ENCODE measurements at regions of chr7 and their contacts with region 1.

Region 1: GRCh38 chr7:74289018-74289658 is at the start of gene CLIP2:
- DNase-seq: peak; percentile 41
- ATAC-seq: peak; percentile 69
- H3K4me3 ChIP-seq: peak within 1 kb of the TSS; percentile 66 to 90 (median 83)
- H3K27ac ChIP-seq: peak within 1 kb of the TSS; percentile 31
- H3K4me1 ChIP-seq: peaks cover 73% of the 10 kb centered on the region
- H3K27me3 ChIP-seq: no peaks in the 10 kb centered on the region
- CTCF ChIP-seq: no peak
- EP300 ChIP-seq: no peak
- POLR2A ChIP-seq: peak in 1 of 2 experiments; percentile 61; a peak in 2 of 4 replicates
- RAD21 ChIP-seq: peak; percentile 51; the same call in 1 of the 2 replicates
- total RNA-seq, gene CLIP2: 13.6 and 17.4 TPM in 2 replicates

Region 2: DNA sequence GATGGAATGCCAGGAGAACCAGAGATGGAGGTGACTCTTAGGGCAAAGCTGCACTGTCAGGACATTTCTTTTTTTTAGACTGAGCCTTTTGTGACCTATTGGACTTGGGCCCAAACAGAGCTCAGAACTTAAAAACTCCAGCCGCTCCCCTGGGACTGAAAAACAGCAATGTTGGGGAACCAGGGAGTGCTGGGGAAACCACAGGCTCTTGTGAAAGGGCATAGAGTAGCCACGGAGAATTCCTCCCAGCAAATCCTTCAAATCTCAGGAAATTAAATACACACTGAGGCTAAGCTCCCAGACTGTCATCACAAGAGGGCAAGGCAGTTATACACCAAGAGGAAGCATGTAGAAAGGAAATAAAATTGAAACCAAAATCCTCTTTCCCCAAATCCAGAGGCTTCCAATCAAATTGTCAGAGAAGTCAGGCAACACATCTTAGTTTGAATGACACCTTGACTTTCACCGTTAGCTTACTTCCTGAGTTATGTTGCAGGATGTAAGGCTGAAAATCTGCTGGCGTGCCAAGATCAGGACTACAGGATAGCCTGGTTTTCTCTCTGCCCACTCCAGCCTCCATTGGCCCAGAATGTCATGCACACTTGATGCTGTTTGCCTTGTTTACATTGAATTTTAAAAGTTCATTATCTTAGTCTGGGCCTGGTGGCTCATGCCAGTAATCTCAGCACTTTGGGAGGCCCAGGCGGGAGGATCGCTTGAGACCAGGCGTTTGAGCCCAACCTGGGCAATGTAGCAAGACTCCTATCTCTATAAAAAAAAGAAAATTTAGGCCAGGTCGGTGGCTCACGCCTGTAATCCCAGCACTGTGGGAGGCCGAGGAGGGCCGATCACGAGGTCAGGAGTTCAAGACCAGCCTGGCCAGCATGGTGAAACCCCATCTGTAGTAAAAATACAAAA is 32.4 kb before region 1 on chr7:
- CTCF ChIA-PET with region 1: no interaction called
- POLR2A ChIA-PET with region 1: interaction called, 6 read pairs
- in situ Hi-C with region 1: no loop called
- intact Hi-C with region 1: loop called (anchors 5 kb)
- DNase-seq: no peak
- ATAC-seq: no peak
- H3K4me3 ChIP-seq: peak overlapping the region in 1 of 3 experiments; percentile 29; a peak in 1 of 6 replicates
- H3K27ac ChIP-seq: peak overlapping the region; percentile 50
- H3K4me1 ChIP-seq: peaks cover 59% of the 10 kb centered on the region
- H3K27me3 ChIP-seq: no peaks in the 10 kb centered on the region; a peak in 1 of 5 replicates
- CTCF ChIP-seq: no peak
- EP300 ChIP-seq: no peak
- POLR2A ChIP-seq: no peak
- RAD21 ChIP-seq: no peak

Region 3: GRCh38 chr7:74262639-74263398 is 26.3 kb before region 1 on chr7:
- CTCF ChIA-PET with region 1: no interaction called
- POLR2A ChIA-PET with region 1: interaction called, 60 read pairs
- in situ Hi-C with region 1: no loop called
- intact Hi-C with region 1: loop called (anchors 5 kb)
- DNase-seq: peak; percentile 42
- ATAC-seq: peak; percentile 78
- H3K4me3 ChIP-seq: peak overlapping the region; percentile 22 to 65 (median 49)
- H3K27ac ChIP-seq: peak overlapping the region; percentile 45
- H3K4me1 ChIP-seq: peaks cover 77% of the 10 kb centered on the region
- H3K27me3 ChIP-seq: no peaks in the 10 kb centered on the region
- CTCF ChIP-seq: no peak
- EP300 ChIP-seq: no peak
- POLR2A ChIP-seq: no peak
- RAD21 ChIP-seq: no peak

Region 4: GRCh38 chr7:74272305-74273038 is 16.7 kb before region 1 on chr7:
- CTCF ChIA-PET with region 1: interaction called, 3 read pairs
- POLR2A ChIA-PET with region 1: interaction called, 60 read pairs
- in situ Hi-C with region 1: no loop called
- intact Hi-C with region 1: loop called (anchors 1 kb)
- DNase-seq: no peak
- ATAC-seq: peak; percentile 68
- H3K4me3 ChIP-seq: peak overlapping the region; percentile 18 to 50 (median 40); a peak in 4 of 6 replicates
- H3K27ac ChIP-seq: peak overlapping the region; percentile 6
- H3K4me1 ChIP-seq: peaks cover 50% of the 10 kb centered on the region
- H3K27me3 ChIP-seq: no peaks in the 10 kb centered on the region
- CTCF ChIP-seq: no peak
- EP300 ChIP-seq: no peak
- POLR2A ChIP-seq: peak in 1 of 2 experiments; percentile 41; a peak in 2 of 4 replicates
- RAD21 ChIP-seq: no peak

Region 5: DNA sequence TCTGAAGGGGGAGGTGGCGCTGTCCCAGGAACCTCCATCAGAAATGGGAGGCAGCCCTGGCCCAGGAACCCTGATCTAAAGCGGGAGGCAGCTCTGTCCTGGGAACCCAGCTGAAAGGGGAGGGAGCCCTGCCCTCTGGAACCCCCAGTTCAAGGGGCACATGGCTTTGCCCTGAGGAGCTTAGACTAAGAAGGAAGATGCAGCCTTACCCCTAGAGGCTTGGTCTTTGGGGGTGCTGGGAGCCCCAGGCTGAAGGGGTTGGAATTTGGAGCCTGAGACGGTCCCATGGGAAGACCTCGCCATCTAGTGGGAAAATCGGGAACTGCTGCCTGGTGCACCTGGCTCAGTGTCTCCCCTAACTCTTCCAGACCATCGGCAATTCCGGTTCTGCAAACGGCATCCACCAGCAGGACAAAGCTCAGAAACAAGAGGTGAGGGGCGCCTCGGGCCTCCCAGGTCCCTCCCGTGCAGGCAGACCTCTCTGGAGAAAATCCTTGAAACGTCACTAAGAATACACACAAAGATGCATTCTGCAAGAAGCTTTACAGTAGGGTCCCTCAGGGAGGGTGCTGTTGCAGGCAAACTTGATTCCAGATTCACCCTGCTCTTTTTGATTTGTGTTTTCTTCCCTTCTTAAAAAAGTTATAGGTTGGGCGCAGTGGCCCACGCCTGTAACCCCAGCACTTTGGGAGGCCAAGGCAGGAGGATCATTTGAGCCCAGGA is 112.2 kb after region 1 on chr7:
- CTCF ChIA-PET with region 1: no interaction called
- POLR2A ChIA-PET with region 1: no interaction called
- in situ Hi-C with region 1: no loop called
- intact Hi-C with region 1: loop called (anchors 5 kb)
- DNase-seq: peak; percentile 49
- ATAC-seq: peak; percentile 66
- H3K4me3 ChIP-seq: no peak overlapping the region
- H3K27ac ChIP-seq: no peak overlapping the region
- H3K4me1 ChIP-seq: no peaks in the 10 kb centered on the region
- H3K27me3 ChIP-seq: no peaks in the 10 kb centered on the region
- CTCF ChIP-seq: peak; percentile 92
- EP300 ChIP-seq: no peak
- POLR2A ChIP-seq: no peak
- RAD21 ChIP-seq: peak; percentile 90

Measured in HepG2 (cell line).